ENCODE measurements at regions of chr13 and their contacts with region 1.

Region 1: GRCh38 chr13:99656092-99656745 is 154.9 kb downstream of the TM9SF2 start:
- DNase-seq: peak; percentile 93
- H3K4me3 Mint-ChIP-seq: peak overlapping the region; percentile 39
- H3K27ac Mint-ChIP-seq: no peak overlapping the region
- H3K4me1 Mint-ChIP-seq: peaks cover 42% of the 10 kb centered on the region
- H3K27me3 Mint-ChIP-seq: no peaks in the 10 kb centered on the region

Region 2: GRCh38 chr13:99606324-99607066 is 49.7 kb before region 1 on chr13:
- CTCF ChIA-PET with region 1: interaction called, 6 read pairs
- intact Hi-C with region 1: loop called (anchors 1 kb)
- DNase-seq: peak; percentile 92
- H3K4me3 Mint-ChIP-seq: peak within 1 kb of the TSS; percentile 82
- H3K27ac Mint-ChIP-seq: peak within 1 kb of the TSS; percentile 75
- H3K4me1 Mint-ChIP-seq: peaks cover 23% of the 10 kb centered on the region
- H3K27me3 Mint-ChIP-seq: no peaks in the 10 kb centered on the region

Region 3: DNA sequence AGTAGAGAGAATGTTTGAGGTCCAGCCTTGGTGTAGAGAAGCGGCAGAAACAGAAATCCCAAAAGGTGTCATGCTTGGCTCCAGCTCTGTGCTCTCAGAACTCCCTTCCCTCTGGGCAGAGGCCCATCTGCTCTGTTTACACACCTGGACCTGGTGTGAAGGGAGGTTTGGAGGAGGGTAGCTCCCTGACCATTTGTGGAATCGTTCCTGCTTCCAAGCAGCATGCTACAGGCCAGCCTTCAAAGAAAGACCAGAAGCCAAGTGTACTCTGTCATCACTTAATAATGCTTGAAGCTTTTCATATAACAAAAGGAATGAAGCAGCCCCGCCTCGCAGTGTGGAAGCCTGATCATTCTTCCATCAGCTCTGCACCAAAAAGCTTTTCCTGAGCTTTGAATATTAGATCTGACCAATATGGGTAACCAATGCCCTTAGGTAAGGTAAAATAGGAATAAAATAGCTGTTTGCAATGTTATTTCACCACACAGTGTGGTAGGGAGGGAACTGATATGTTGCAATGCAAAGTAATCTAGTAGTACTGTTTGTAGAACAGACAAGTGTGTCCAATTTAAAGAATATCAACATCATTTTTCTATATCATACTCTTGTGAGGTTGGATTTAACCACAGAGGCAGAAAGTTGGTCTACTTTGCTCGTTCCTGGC is 252.1 kb after region 1 on chr13:
- CTCF ChIA-PET with region 1: interaction called, 5 read pairs
- intact Hi-C with region 1: loop called (anchors 1 kb)
- DNase-seq: no peak
- H3K4me3 Mint-ChIP-seq: no peak overlapping the region
- H3K27ac Mint-ChIP-seq: no peak overlapping the region
- H3K4me1 Mint-ChIP-seq: peaks cover 14% of the 10 kb centered on the region
- H3K27me3 Mint-ChIP-seq: peaks cover 23% of the 10 kb centered on the region

Region 4: DNA sequence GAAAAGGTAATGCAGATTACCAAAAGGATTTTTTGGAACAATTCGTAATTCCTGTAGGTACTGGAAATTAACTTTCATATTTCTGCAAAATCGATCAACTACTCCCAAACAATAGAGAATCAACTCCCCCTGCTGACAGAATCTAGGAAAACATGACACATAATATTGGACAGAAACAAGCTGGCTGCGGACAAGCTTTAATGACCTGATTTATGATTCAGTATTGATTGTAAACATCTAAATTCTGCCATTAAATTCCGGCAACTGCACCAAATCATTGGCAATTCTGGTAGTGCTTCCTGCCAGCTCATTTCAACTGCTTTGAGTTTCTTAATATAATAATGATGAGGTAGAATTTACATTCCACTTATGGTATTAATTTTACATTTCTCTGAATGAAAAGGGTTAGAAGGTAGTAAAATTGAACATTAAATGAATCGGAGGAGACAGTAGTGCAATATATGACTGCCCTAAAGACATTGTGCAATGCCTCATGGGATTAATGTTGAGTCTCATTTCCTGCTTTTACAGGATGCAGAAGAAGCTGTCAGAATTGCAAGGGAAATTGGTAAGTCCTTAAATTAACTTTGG is 579.2 kb after region 1 on chr13:
- CTCF ChIA-PET with region 1: interaction called, 9 read pairs
- intact Hi-C with region 1: loop called (anchors 1 kb)
- DNase-seq: no peak
- H3K4me3 Mint-ChIP-seq: no peak overlapping the region
- H3K27ac Mint-ChIP-seq: no peak overlapping the region
- H3K4me1 Mint-ChIP-seq: peaks cover 5% of the 10 kb centered on the region
- H3K27me3 Mint-ChIP-seq: no peaks in the 10 kb centered on the region

Region 5: DNA sequence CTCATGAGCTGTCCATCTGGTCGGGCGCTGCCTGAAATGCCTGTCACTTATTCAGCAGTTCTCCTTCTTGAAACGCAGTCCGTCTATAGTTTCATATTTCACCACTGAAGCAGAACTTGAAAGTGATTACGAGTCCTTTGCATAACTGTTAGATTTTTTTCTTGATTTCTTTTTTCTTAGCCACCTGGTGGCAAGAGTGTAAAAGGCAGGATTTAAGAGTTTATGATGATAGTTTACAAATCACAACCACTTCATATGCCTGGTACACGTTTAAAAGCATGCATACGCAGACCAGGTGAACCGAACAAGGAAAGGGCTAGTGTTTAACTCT is 886.6 kb after region 1 on chr13:
- CTCF ChIA-PET with region 1: interaction called, 4 read pairs
- intact Hi-C with region 1: loop called (anchors 10 kb)
- DNase-seq: peak; percentile 12
- H3K4me3 Mint-ChIP-seq: no peak overlapping the region
- H3K27ac Mint-ChIP-seq: no peak overlapping the region
- H3K4me1 Mint-ChIP-seq: peaks cover 27% of the 10 kb centered on the region
- H3K27me3 Mint-ChIP-seq: no peaks in the 10 kb centered on the region

Region 6: DNA sequence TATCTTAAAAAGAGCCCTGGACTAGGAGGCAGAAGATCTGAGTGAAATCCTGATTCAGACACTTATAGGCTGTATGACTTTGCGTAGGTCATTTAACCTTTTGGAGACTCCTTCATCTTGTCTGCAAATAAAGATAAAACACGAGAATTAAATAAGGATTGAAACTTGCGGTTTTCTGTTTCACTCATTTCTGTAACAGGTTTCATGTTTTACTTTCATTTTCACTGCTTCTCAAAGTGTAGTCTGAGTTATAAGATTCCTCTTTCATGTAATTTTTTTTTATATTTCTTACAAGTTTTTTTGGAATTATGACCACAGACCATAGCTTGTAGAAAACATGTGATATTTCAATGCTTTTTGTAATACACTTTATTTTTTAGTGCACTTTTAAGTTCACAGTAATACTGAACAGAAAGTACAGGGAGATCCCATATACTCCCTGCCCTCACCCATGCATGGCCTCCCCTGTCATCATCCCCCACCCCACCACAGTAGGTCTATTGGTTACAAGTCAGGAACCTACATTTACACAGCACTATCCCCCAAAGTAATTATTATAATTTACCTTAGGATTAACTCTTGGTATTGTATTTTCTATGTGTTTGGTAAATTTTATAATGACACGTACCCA is 1970.8 kb after region 1 on chr13:
- CTCF ChIA-PET with region 1: no interaction called
- intact Hi-C with region 1: loop called (anchors 5 kb)
- DNase-seq: peak; percentile 58
- H3K4me3 Mint-ChIP-seq: peak overlapping the region; percentile 3
- H3K27ac Mint-ChIP-seq: no peak overlapping the region
- H3K4me1 Mint-ChIP-seq: peaks cover 43% of the 10 kb centered on the region
- H3K27me3 Mint-ChIP-seq: peaks cover 14% of the 10 kb centered on the region